Heart right ventricle (tissue), 16 donors: ENCODE measurements at regions of chr6 and their contacts with region 1.

Region 1: GRCh38 chr6:161870236-161870901 is 596.5 kb upstream of the AGPAT4 start:
- DNase-seq: no peak
- ATAC-seq: no peak
- H3K4me3 ChIP-seq: no peak overlapping the region
- H3K27ac ChIP-seq: no peak overlapping the region
- H3K4me1 ChIP-seq: no peaks in the 10 kb centered on the region
- H3K27me3 ChIP-seq: no peaks in the 10 kb centered on the region
- CTCF ChIP-seq: no peak

Region 2: GRCh38 chr6:161949531-161949930 is 79.2 kb after region 1 on chr6:
- intact Hi-C with region 1: no loop called
- DNase-seq: no peak
- ATAC-seq: no peak
- H3K4me3 ChIP-seq: no peak overlapping the region
- H3K27ac ChIP-seq: no peak overlapping the region
- H3K4me1 ChIP-seq: peaks cover 0 to 23% (median 13%) of the 10 kb centered on the region in 9 donors
- H3K27me3 ChIP-seq: no peaks in the 10 kb centered on the region
- CTCF ChIP-seq: no peak

Region 3: DNA sequence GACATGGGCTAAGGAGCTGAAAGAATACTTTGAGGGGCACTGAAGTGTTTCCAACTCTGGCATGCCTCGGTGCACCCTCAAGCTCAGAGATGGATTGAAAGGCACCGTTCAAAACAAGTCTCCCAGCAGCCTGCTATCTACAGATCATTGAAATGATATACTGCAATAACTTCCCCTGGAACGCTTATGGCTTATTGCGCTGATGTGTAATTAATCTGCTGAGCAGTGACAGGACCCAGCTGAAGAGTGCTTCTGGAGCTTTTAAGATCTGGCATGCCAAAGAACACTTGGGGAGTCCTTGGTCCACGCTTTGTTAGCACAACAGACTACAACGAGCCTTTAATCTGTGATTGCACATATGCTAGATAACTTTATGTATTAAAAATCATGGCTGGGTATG is 149.0 kb after region 1 on chr6:
- intact Hi-C with region 1: loop called in 1 of 10 experiments (anchors 10 kb)
- DNase-seq: no peak
- ATAC-seq: no peak
- H3K4me3 ChIP-seq: no peak overlapping the region
- H3K27ac ChIP-seq: no peak overlapping the region
- H3K4me1 ChIP-seq: no peaks in the 10 kb centered on the region
- H3K27me3 ChIP-seq: no peaks in the 10 kb centered on the region
- CTCF ChIP-seq: no peak

Region 4: GRCh38 chr6:162245830-162246420 is 375.6 kb after region 1 on chr6:
- intact Hi-C with region 1: no loop called
- DNase-seq: no peak
- ATAC-seq: no peak
- H3K4me3 ChIP-seq: no peak overlapping the region
- H3K27ac ChIP-seq: no peak overlapping the region
- H3K4me1 ChIP-seq: no peaks in the 10 kb centered on the region
- H3K27me3 ChIP-seq: no peaks in the 10 kb centered on the region
- CTCF ChIP-seq: no peak